ENCODE measurements at regions of chr16 and their contacts with region 1.

Region 1: DNA sequence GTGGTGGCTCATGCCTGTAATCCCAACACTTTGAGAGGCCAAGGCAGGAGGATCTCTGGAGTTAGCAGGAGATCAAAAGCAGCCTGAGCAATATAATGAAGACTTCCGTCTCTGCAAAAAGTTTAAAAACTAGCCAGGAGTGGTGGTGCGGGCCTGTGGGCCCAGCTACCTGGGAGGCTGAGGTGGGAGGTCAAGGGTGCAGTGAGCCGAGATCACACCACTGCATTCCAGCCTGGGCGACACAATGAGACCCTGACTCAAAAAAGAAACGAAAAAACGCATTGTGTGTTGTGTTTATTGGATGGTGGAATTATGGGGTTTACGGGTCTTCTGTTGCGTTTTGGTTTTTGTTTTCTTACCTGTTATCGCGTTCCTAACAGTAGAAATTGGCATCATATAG is 863 bp upstream of the DDX19A start:
- DNase-seq: no peak
- ATAC-seq: no peak
- H3K4me3 ChIP-seq: peak overlapping the region; percentile 81 to 93
- H3K4me3 Mint-ChIP-seq: peak overlapping the region; percentile 94 to 95 (median 94)
- H3K27ac ChIP-seq: peak overlapping the region; percentile 94
- H3K27ac Mint-ChIP-seq: peak overlapping the region; percentile 87 to 98
- H3K4me1 ChIP-seq: peaks cover 10 to 28% of the 10 kb centered on the region in 2 experiments
- H3K4me1 Mint-ChIP-seq: peaks cover 30 to 35% (median 33%) of the 10 kb centered on the region in 3 donors
- H3K27me3 ChIP-seq: no peaks in the 10 kb centered on the region
- H3K27me3 Mint-ChIP-seq: no peaks in the 10 kb centered on the region

Region 2: GRCh38 chr16:70289229-70290098 is 56.4 kb before region 1 on chr16 and contains the start of gene AARS1:
- CTCF ChIA-PET with region 1: interaction called in 1 of 2 experiments, 3 read pairs
- POLR2A ChIA-PET with region 1: interaction called, 3 to 17 read pairs
- DNase-seq: peak; percentile 77 to 99 (median 92)
- ATAC-seq: peak; percentile 97 to 99 (median 98)
- H3K4me3 ChIP-seq: peak within 1 kb of the TSS; percentile 79 to 95
- H3K4me3 Mint-ChIP-seq: peak within 1 kb of the TSS; percentile 96 to 99 (median 97)
- H3K27ac ChIP-seq: peak within 1 kb of the TSS; percentile 87
- H3K27ac Mint-ChIP-seq: peak within 1 kb of the TSS; percentile 97 to 98
- H3K4me1 ChIP-seq: peaks cover 0 to 22% of the 10 kb centered on the region in 2 experiments
- H3K4me1 Mint-ChIP-seq: peaks cover 20 to 30% (median 23%) of the 10 kb centered on the region in 3 donors
- H3K27me3 ChIP-seq: no peaks in the 10 kb centered on the region
- H3K27me3 Mint-ChIP-seq: no peaks in the 10 kb centered on the region
- total RNA-seq, gene AARS1: 23.6 to 131 (median 117) TPM

Region 3: DNA sequence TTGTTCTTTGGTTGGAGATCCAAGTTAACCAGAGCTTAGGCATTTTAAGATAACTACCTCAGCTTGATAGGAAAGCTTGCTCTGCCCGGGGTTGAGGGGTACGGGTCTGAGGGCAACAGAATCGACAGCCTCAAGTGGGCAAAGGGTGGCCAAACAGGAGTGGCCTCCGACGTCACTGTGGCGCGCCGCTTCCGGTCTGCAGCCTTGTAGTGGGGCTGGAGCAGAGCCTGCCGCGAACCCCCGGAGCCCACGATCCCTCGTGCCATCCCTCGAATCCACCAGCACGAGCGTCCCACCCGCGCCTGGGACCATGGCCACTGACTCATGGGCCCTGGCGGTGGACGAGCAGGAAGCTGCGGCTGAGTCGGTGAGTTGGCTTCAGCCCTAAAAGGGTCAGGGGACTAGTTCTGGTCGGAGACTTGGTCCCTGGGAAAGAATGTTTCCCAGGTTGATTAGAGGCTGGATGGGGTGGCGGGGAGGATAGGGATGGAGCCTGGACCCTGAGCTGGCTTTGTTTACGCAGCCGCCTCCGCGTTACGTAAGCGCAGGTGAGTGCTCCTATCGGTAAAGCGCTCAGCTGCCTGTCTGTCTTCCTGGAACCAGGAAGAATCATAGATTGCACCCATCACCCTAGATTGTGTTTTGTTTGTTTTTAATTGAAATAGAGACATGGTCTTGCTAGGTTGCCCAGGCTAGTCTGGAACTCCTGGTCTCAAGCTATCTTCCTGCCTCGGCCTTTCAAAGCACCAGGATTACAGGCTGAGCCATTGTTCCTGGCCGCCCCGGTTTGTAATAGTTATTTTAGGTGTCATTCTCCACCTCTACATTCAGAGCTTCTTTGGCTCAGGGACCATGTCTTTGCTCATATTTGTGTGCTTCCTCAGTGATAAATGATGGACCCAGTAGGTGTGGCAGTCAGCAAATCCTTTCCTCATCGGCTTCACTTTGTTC is 46.6 kb before region 1 on chr16 and contains the start of gene DDX19B:
- CTCF ChIA-PET with region 1: interaction called in 1 of 2 experiments, 3 read pairs
- POLR2A ChIA-PET with region 1: interaction called, 5 to 11 read pairs
- DNase-seq: peak in 34 of 35 experiments; percentile 20 to 70 (median 44)
- ATAC-seq: peak; percentile 76 to 88 (median 80)
- H3K4me3 ChIP-seq: peak within 1 kb of the TSS; percentile 92
- H3K4me3 Mint-ChIP-seq: peak within 1 kb of the TSS; percentile 93 to 95 (median 95)
- H3K27ac ChIP-seq: peak within 1 kb of the TSS; percentile 95
- H3K27ac Mint-ChIP-seq: peak within 1 kb of the TSS; percentile 95 to 99
- H3K4me1 ChIP-seq: peaks cover 2 to 21% of the 10 kb centered on the region in 2 experiments
- H3K4me1 Mint-ChIP-seq: peaks cover 43 to 52% (median 45%) of the 10 kb centered on the region in 3 donors
- H3K27me3 ChIP-seq: no peaks in the 10 kb centered on the region
- H3K27me3 Mint-ChIP-seq: no peaks in the 10 kb centered on the region
- total RNA-seq, gene DDX19B: 26.4 to 37.4 (median 33.2) TPM

Region 4: GRCh38 chr16:70523743-70524400 is 178.0 kb after region 1 on chr16 and contains the start of gene SF3B3:
- CTCF ChIA-PET with region 1: interaction called in 1 of 2 experiments, 5 read pairs
- POLR2A ChIA-PET with region 1: interaction called in 1 of 2 experiments, 10 read pairs
- DNase-seq: peak in 32 of 35 experiments; percentile 55 to 85 (median 71)
- ATAC-seq: peak; percentile 71 to 77 (median 72)
- H3K4me3 ChIP-seq: peak within 1 kb of the TSS; percentile 84 to 95
- H3K4me3 Mint-ChIP-seq: peak within 1 kb of the TSS; percentile 97 to 98 (median 97)
- H3K27ac ChIP-seq: peak within 1 kb of the TSS; percentile 97
- H3K27ac Mint-ChIP-seq: peak within 1 kb of the TSS; percentile 99
- H3K4me1 ChIP-seq: peaks cover 24 to 66% of the 10 kb centered on the region in 2 experiments
- H3K4me1 Mint-ChIP-seq: peaks cover 60 to 67% (median 66%) of the 10 kb centered on the region in 3 donors
- H3K27me3 ChIP-seq: no peaks in the 10 kb centered on the region
- H3K27me3 Mint-ChIP-seq: no peaks in the 10 kb centered on the region
- total RNA-seq, gene SF3B3: 202 to 291 (median 264) TPM

Measured in T-cell (primary cell).